Activated CD4-positive, alpha-beta memory T cell treated with anti-CD3 and anti-CD28 coated beads for 36 hours (primary cell): ENCODE measurements at regions of chr14 and their contacts with region 1.

Region 1: GRCh38 chr14:30521899-30522736 is 36.8 kb upstream of the G2E3 start:
- DNase-seq: no peak
- H3K4me3 Mint-ChIP-seq: no peak overlapping the region
- H3K27ac Mint-ChIP-seq: no peak overlapping the region
- H3K4me1 Mint-ChIP-seq: peaks cover 10% of the 10 kb centered on the region
- H3K27me3 Mint-ChIP-seq: no peaks in the 10 kb centered on the region

Region 2: GRCh38 chr14:30270200-30271161 is 251.6 kb before region 1 on chr14:
- CTCF ChIA-PET with region 1: interaction called, 10 read pairs
- POLR2A ChIA-PET with region 1: no interaction called
- intact Hi-C with region 1: no loop called
- DNase-seq: peak; percentile 75
- H3K4me3 Mint-ChIP-seq: no peak overlapping the region
- H3K27ac Mint-ChIP-seq: no peak overlapping the region
- H3K4me1 Mint-ChIP-seq: no peaks in the 10 kb centered on the region
- H3K27me3 Mint-ChIP-seq: peaks cover 4% of the 10 kb centered on the region

Region 3: DNA sequence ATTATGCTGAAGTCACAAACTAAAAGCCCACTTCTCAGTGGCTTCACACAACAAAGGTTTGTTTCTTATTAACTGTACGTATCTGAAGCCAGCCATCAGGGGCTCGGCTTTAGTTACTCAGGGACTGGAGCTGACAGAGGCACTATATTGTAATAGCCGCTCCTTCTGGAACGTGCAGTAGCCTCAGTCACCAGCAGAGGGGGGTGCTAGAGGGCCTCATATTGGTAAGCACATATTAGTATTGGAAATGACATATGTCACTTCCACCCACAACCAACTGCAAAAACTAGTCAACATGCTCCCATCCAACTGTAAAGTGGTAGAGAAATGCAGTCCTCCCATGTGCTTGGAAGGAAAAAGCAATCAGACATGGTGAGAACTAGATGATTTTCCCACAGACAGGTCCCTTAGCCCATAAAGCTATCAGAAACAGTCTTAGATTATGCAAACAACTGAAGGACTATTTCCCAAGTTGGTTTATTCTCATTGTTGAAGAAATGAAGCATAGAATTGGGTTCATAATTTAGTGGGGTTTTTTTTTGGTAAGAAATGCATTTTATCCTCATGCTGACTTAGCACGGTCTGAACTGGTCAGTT is 146.7 kb before region 1 on chr14:
- CTCF ChIA-PET with region 1: interaction called, 50 read pairs
- POLR2A ChIA-PET with region 1: no interaction called
- intact Hi-C with region 1: loop called (anchors 1 kb)
- DNase-seq: peak; percentile 78
- H3K4me3 Mint-ChIP-seq: no peak overlapping the region
- H3K27ac Mint-ChIP-seq: no peak overlapping the region
- H3K4me1 Mint-ChIP-seq: no peaks in the 10 kb centered on the region
- H3K27me3 Mint-ChIP-seq: peaks cover 6% of the 10 kb centered on the region

Region 4: DNA sequence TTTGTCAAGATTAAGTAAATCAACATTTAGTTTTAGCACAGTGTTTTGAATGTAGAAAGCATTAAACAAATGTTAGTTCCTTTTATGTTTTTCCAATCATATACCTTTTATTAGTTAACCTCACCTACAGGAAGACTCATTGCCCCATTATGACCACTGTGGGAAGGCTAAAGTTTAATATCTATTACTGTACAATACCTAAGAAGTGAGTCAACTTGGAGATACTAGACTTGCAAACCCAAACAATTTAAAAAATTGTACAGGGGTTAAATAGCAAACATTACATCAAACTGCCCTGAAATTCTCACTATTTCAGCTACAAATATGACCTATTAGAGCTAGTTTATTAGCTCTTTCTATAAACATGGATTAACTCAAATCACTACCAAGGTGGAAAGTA is 28.2 kb after region 1 on chr14:
- CTCF ChIA-PET with region 1: interaction called, 12 read pairs
- POLR2A ChIA-PET with region 1: no interaction called
- intact Hi-C with region 1: no loop called
- DNase-seq: no peak
- H3K4me3 Mint-ChIP-seq: no peak overlapping the region
- H3K27ac Mint-ChIP-seq: no peak overlapping the region
- H3K4me1 Mint-ChIP-seq: peaks cover 6% of the 10 kb centered on the region
- H3K27me3 Mint-ChIP-seq: peaks cover 10% of the 10 kb centered on the region

Region 5: DNA sequence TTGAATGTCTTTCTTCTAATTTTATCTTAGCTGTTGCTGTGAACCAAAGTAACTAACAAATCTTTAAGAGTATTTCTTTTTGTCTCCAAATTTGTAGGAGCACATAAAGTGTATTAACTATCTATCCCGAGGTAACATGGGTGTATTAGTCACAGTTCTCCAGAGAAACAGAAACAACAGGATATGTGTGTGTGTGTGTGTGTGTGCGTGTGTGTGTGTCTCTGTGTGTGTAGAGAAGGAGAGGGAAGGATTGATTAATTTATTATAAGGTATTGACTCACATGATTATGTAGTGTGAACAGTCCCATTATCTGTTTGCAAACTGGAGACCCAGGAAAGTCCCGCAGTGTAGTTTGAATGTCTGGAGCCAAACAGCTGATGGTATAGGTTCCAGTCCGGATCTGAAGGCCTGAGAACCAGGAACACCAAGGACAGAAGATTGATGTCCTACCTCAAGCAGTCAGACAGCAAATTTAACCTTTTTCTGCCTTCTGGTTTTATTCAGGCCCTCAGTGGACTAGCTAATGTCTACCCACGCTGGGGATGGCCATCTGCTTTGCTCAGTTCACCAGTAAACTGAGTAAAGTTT is 51.2 kb after region 1 on chr14:
- CTCF ChIA-PET with region 1: no interaction called
- POLR2A ChIA-PET with region 1: no interaction called
- intact Hi-C with region 1: no loop called
- DNase-seq: no peak
- H3K4me3 Mint-ChIP-seq: no peak overlapping the region
- H3K27ac Mint-ChIP-seq: no peak overlapping the region
- H3K4me1 Mint-ChIP-seq: peaks cover 75% of the 10 kb centered on the region
- H3K27me3 Mint-ChIP-seq: no peaks in the 10 kb centered on the region